Activated naive CD4-positive, alpha-beta T cell treated with anti-CD3 and anti-CD28 coated beads for 36 hours (primary cell): ENCODE measurements at regions of chr12 and their contacts with region 1.

Region 1: GRCh38 chr12:38316391-38317129 is at the start of gene ALG10B:
- DNase-seq: peak; percentile 95
- H3K4me3 Mint-ChIP-seq: peak within 1 kb of the TSS; percentile 93
- H3K27ac Mint-ChIP-seq: peak within 1 kb of the TSS; percentile 91
- H3K4me1 Mint-ChIP-seq: peaks cover 22% of the 10 kb centered on the region
- H3K27me3 Mint-ChIP-seq: no peaks in the 10 kb centered on the region
- total RNA-seq, gene ALG10B: 16.6 to 17.1 TPM

Region 2: GRCh38 chr12:37672655-37673260 is 643.8 kb before region 1 on chr12:
- CTCF ChIA-PET with region 1: no interaction called
- intact Hi-C with region 1: loop called (anchors 1 kb)
- DNase-seq: no peak
- H3K4me3 Mint-ChIP-seq: no peak overlapping the region
- H3K27ac Mint-ChIP-seq: no peak overlapping the region
- H3K4me1 Mint-ChIP-seq: no peaks in the 10 kb centered on the region
- H3K27me3 Mint-ChIP-seq: no peaks in the 10 kb centered on the region

Region 3: DNA sequence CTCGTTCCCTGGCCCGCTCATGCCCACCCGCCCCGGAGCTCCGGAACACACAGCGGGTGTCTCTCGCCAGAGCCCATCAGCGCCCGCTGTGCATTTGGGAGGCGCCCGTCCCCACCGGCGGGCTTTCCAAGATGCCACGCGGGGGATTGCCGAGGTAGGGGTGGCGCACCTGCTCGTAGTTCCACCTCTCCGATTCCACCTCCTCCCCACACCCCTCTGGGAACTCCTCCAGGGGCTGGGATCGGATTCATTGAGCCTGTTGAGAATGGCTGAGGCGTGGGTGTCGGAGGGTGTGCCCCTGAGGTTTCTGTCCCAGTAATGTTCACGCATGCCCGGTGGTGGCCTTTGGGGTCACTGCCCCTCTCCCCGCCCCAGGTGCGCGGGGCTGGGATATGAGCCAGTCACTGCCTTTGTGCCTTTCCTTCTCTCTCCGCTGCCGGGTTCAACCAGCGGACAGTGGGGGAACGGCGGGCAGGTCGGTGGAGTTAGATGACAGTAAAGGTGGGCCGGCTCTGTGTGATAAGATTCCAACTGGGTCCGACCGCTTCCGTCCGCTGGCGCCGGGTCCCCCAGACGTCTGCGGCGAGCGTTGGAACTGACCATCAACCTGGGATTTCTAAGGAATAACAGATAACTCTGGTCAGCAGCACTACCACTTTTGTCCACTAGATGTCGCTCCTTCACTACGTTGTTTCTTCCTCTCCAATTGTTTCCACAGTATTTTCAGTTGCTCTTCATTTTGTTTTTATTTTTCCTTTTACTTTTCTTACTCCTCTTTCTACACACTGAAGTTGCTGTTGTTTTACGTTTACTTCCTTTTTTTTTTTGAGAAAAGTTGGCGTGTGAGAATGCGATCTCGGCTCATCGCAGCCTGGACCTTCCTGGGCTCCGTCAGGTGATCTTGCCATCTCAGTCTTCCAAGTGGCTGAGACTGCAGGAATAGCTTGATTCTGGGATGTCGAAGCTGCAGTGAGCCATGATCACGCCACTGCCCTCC is 178.0 kb before region 1 on chr12:
- CTCF ChIA-PET with region 1: interaction called, 5 read pairs
- intact Hi-C with region 1: loop called (anchors 1 kb)
- DNase-seq: peak; percentile 73
- H3K4me3 Mint-ChIP-seq: peak overlapping the region; percentile 61
- H3K27ac Mint-ChIP-seq: no peak overlapping the region
- H3K4me1 Mint-ChIP-seq: peaks cover 3% of the 10 kb centered on the region
- H3K27me3 Mint-ChIP-seq: peaks cover 6% of the 10 kb centered on the region

Region 4: GRCh38 chr12:38332814-38333213 is 16.3 kb after region 1 on chr12:
- CTCF ChIA-PET with region 1: no interaction called
- intact Hi-C with region 1: loop called (anchors 1 kb)
- DNase-seq: no peak
- H3K4me3 Mint-ChIP-seq: no peak overlapping the region
- H3K27ac Mint-ChIP-seq: no peak overlapping the region
- H3K4me1 Mint-ChIP-seq: no peaks in the 10 kb centered on the region
- H3K27me3 Mint-ChIP-seq: no peaks in the 10 kb centered on the region